ENCODE measurements at regions of chr7 and their contacts with region 1.

Region 1: DNA sequence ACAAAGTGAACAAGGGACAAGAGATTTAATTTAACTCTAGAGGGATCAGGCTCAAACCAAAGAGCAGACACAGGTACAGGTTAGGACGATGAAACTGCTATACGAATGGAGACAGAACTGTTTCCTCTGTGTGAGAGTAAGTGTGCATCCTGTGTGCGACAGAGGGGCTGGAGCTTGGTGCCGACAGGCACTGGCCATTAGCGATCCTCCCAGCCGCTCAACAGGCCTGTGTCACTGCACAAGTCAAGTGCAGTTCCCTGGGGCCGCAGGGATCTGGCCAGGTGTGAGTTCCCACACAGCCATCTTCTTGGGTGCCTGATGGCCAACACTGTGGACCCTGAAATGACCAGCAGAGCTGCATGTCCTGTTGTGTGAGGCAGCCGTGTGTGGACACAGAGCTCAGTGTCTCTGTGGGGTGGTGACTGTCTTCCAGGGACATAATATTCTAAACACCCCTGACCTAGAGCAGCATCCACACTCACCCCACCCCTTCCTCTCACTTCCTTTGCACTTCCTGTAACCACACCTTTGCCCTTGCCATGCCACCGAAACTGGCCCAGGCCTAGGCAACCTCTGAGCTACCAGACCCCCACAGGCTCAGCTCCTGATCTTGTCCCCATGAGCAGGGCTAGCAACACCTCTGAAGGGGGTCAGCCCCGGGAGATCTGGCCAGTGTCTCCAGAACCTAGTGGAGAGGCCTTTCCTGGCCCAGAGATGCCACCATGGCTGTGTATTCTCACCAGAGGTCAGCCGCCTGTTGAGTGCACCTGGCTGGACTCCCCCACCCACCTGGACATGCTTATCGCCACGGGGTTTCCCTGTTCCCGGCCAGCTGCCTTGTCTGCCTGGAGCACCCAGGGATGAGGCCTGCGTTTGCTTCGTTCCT is 11.7 kb upstream of the TBRG4 start:
- DNase-seq: no peak
- H3K4me3 ChIP-seq: no peak overlapping the region
- H3K27ac ChIP-seq: no peak overlapping the region
- H3K4me1 ChIP-seq: no peaks in the 10 kb centered on the region
- H3K27me3 ChIP-seq: no peaks in the 10 kb centered on the region
- CTCF ChIP-seq: no peak

Region 2: GRCh38 chr7:44712012-44712411 is 411.2 kb before region 1 on chr7:
- CTCF ChIA-PET with region 1: interaction called, 17 read pairs
- POLR2A ChIA-PET with region 1: no interaction called
- intact Hi-C with region 1: no loop called
- DNase-seq: peak; percentile 87 to 97
- H3K4me3 ChIP-seq: no peak overlapping the region
- H3K27ac ChIP-seq: peak overlapping the region; percentile 69
- H3K4me1 ChIP-seq: peaks cover 52% of the 10 kb centered on the region
- H3K27me3 ChIP-seq: no peaks in the 10 kb centered on the region
- CTCF ChIP-seq: no peak

Region 3: DNA sequence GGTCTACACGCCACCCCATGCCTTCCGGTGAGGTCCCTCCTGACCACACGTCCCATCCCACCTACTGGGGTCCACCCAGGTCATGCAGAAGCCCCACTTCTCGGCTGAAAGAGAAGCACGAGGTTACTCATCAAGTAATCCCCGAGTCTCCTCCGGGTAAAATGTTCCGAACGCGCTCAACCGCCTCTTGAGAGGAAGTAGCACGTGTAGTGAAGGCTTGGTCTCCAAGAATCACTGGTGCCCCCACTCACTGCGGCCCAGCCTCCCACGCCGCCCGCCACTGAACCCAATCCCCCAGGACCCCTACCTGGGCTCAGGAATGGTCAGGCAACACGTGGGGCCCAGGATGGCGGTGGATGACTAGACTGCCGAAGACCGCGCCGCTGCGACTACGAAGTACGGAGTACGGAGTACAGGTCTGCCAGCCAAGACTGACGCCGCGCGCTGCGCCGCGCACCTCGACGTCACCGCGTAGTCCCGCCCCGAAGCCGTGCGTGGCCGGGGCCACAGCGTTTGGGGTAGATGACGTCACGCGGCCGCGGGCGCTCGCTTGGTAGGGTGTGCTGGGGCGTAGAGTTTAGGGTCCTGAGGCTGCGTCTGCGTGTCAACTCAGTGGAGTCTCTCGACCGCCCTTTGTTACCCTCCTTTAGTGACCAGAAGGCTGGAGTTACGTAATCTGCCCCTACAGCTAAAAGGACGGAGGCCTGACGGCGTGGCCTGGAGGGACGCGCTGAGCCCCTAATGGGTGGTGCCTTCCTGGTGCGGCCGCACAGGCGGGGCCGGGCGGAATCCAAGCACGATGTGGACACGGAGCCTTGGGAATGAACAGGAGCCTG is 136.8 kb before region 1 on chr7:
- CTCF ChIA-PET with region 1: no interaction called
- POLR2A ChIA-PET with region 1: interaction called, 10 read pairs
- intact Hi-C with region 1: no loop called
- DNase-seq: peak; percentile 92 to 98
- H3K4me3 ChIP-seq: peak overlapping the region; percentile 95
- H3K27ac ChIP-seq: peak overlapping the region; percentile 87
- H3K4me1 ChIP-seq: peaks cover 25% of the 10 kb centered on the region
- H3K27me3 ChIP-seq: no peaks in the 10 kb centered on the region
- CTCF ChIP-seq: no peak; the same call in 1 of the 2 replicates

Measured in PC-9 (cell line).